Activated CD4-positive, alpha-beta T cell treated with anti-CD3 and anti-CD28 coated beads, Interleukin-2, amount 10 ng/mL, durations not matched to agents 24 days and 14 days (primary cell): ENCODE measurements at regions of chr12 and their contacts with region 1.

Region 1: DNA sequence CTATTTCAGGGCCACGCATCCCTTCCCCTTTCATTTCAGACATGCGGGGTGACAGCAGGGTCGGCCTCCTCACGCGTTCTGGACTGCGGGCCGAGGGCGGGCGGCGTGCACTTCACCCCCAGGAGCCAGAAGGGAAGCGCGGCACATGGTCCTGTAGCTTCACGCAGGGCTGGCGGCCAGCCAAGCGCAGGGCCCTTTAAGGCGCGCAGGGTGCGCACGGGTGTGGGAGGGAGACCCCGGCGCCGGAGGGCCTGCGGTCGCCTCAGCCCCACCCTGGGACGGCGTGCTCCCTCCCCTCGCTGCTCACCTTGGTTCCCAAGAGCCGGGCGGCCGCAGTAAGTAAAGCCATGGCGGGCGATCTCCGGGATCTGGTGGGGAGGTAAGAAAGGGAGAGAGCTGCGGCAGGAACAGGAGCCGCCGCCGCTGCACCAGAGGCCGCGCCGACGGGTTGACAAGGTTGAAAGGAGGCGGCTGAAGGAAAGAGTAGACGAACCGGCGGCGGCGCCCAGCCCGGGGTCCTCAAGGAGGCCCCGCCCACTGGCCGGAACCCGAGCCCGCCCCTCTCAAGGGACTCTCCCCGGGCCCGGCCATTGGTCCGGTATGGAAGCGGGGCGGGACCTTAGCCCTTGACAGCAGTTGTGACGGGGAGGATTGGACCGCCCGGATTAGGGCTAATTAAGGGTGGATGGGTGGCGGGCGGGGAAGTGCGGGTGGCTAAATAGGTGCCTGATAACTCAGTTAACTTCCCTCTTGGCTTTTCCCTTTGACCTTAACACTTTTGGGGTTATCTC is at the start of gene CS:
- DNase-seq: peak; percentile 99
- H3K4me3 Mint-ChIP-seq: peak within 1 kb of the TSS; percentile 99
- H3K27ac Mint-ChIP-seq: peak within 1 kb of the TSS; percentile 97
- H3K4me1 Mint-ChIP-seq: peaks cover 39% of the 10 kb centered on the region
- H3K27me3 Mint-ChIP-seq: no peaks in the 10 kb centered on the region
- total RNA-seq, gene CS: 311 and 317 TPM in 2 replicates

Region 2: DNA sequence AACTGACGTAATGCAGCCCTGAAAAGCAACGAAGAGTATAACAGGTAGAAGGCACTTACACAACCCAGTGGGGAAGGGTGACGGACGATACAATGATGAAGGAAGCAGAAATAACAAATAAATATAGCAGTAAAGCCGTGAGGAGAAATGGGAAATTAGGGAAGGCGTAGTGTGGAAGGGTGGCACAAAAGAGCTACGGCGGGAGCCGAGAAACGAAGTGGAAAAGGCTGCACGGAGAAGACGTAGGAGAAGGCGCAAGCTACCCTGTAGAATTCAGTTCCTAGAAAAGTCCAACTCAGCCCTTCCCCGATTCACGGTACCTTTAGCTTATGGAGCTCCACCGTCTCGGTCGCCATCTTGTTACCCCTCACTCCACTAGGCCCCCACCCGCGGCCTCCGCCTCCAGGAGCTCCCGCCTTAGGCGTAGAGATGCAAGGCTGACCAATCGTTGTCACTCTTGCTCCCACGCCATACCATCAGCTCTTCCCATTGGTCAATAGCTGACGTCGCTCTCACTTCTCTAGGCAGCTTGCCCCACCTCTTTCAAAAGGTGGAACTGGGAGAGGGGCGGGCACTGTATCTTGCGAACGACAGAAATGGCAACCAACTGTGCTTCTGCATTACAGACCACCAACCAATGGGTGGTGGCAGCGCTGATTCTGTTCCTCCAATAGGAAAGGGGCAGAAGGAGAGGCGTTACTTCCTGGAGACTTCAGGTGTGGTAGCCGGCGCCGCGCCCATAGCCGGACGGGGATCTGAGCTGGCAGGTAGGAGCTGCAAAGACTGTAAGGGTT is 482.5 kb before region 1 on chr12 and contains the starts of genes ORMDL2 and SARNP:
- intact Hi-C with region 1: loop called (anchors 1 kb)
- DNase-seq: peak; percentile 99
- H3K4me3 Mint-ChIP-seq: no peak within 1 kb of the TSS
- H3K27ac Mint-ChIP-seq: peak within 1 kb of the TSS; percentile 39
- H3K4me1 Mint-ChIP-seq: peaks cover 23% of the 10 kb centered on the region
- H3K27me3 Mint-ChIP-seq: no peaks in the 10 kb centered on the region
- total RNA-seq, gene ORMDL2: 49.8 and 55.8 TPM in 2 replicates
- total RNA-seq, gene SARNP: 76.6 and 81.6 TPM in 2 replicates

Region 3: DNA sequence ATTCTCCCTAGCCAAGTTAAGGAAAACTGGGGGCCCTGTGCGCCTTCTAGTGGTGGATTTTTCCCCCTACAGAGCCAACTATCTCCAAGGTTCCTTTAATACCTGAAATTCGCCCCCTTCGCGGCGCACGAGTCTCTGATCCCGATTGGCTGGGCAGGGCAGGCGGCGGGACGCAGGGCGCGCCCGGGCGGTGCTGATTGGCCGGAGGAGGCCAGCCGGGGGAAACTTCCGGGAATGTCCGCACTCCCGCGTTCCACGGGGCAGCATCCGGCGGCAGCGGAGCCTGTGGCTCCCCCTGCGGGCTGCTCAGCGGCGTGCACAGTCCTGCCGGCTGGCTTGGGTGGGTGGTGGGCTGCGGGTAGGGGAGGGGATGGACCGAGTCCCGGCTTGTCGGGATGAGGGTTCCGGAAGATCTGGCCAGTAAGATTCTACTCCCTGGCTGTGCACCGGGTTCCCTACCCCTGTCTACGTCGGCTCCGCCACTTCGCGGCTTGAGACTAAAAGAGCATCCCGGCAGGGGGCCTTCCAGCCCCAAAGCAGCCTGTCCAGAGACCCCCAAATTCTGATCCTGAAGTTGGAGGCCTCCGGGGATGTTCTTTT is 75.8 kb before region 1 on chr12 and contains the start of gene NABP2:
- intact Hi-C with region 1: loop called (anchors 1 kb)
- DNase-seq: peak; percentile 99
- H3K4me3 Mint-ChIP-seq: peak within 1 kb of the TSS; percentile 100
- H3K27ac Mint-ChIP-seq: peak within 1 kb of the TSS; percentile 85
- H3K4me1 Mint-ChIP-seq: peaks cover 39% of the 10 kb centered on the region
- H3K27me3 Mint-ChIP-seq: no peaks in the 10 kb centered on the region
- total RNA-seq, gene NABP2: 94.7 and 96.0 TPM in 2 replicates

Region 4: GRCh38 chr12:56315622-56316473 is 15.8 kb after region 1 on chr12 and contains the start of gene CNPY2:
- intact Hi-C with region 1: loop called (anchors 1 kb)
- DNase-seq: peak; percentile 97
- H3K4me3 Mint-ChIP-seq: peak within 1 kb of the TSS; percentile 97
- H3K27ac Mint-ChIP-seq: peak within 1 kb of the TSS; percentile 98
- H3K4me1 Mint-ChIP-seq: peaks cover 7% of the 10 kb centered on the region
- H3K27me3 Mint-ChIP-seq: no peaks in the 10 kb centered on the region
- total RNA-seq, gene CNPY2: 165 and 169 TPM in 2 replicates

Region 5: DNA sequence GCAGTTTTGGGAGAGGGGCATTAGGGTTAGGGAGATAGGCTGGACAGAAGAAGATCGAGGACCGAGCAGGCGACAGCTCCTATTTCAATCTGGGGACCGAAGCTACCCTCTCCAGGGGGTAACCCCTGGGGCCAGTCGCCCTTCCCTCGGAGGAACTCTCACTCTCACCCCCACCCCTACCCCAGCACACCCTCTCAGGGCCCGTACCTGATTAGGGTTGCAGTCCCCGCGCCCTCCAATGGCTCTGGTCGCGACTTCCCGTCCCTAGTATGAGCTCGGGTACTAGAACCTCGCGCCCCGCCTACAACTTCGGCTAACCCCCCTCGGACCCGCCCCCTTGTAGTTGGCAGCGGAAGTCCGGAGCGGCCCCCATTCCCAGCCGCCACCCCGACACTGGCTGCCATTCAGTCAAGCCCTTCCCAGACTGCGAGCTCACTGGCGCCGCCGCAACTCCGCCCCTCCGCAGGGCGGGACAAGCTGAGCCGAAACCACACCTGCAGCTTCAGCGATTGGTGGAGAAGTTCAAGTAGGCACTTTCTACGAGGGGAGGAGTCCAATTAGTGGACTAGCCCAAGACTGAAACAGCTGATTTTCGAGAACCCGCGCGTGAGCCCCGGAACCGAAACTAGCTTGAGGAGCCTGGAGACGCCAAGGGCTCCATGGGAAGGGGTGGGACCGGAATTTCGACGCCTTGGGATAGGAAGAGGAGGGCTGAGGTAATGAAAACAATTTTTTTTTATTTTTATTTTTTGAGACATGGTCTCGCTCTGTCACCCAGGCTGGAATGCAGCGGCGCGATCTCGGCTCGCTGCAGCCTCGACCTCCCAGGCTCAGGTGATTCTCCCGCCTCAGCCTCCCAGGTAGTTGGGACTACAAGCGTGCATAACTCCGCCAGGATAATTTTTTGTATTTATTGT is 60.1 kb after region 1 on chr12 and contains the start of gene STAT2:
- intact Hi-C with region 1: loop called (anchors 1 kb)
- DNase-seq: peak; percentile 100
- H3K4me3 Mint-ChIP-seq: peak within 1 kb of the TSS; percentile 94
- H3K27ac Mint-ChIP-seq: peak within 1 kb of the TSS; percentile 95
- H3K4me1 Mint-ChIP-seq: peaks cover 31% of the 10 kb centered on the region
- H3K27me3 Mint-ChIP-seq: no peaks in the 10 kb centered on the region
- total RNA-seq, gene STAT2: 64.9 and 68.4 TPM in 2 replicates